Caco-2 (cell line): ENCODE measurements at regions of chr16 and their contacts with region 1.

Region 1: DNA sequence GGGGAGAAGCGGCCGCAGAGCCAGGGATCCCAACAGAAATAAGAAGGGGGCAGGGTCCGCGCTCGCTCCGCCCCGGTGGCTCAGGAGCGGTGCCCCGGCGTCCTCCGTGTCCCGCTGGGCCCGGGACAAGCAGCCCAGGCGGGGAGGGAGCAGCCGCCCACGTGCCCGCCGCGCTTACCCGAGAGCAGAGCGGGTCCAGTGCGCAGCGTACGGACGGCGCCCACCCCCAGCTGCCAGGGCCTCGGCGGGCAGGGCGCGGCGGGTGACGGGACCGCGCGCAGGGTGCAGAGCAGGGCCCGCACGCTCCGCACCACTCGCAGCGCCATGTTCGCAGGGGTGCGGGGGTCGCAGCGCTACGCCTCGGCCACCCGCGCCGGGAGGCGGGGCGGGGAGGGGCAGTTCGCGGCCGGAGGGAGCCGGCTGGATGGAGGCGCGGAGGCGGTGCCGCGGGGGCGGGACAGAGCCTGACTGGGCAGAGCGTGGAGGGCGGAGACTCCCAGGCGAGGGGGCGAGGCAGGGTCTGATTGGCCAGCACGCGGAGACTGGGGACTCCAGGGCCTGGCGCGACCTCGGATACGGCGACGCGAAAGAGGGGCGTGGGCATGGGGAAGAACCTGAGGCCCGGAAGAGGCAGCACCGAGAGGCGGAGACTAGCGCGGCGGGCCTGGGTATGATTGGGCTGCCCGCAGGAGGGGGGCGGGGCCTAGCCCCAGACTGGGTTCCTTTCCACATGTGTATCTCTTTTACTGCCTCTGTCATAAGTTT is at the start of gene GCSH:
- DNase-seq: peak; percentile 100
- H3K4me3 ChIP-seq: peak within 1 kb of the TSS; percentile 97
- H3K4me3 Mint-ChIP-seq: peak within 1 kb of the TSS; percentile 73
- H3K27ac Mint-ChIP-seq: peak within 1 kb of the TSS; percentile 74
- H3K4me1 ChIP-seq: 0 out of 2 replicates have a peak, but pooled peaks cover 3% of the 10 kb centered on the region
- H3K4me1 Mint-ChIP-seq: peaks cover 7% of the 10 kb centered on the region
- H3K27me3 ChIP-seq: no peaks in the 10 kb centered on the region
- H3K27me3 Mint-ChIP-seq: no peaks in the 10 kb centered on the region
- CTCF ChIP-seq: no peak
- total RNA-seq, gene GCSH: 105 and 115 TPM in 2 replicates

Region 2: GRCh38 chr16:80948886-80949493 is 147.1 kb before region 1 on chr16:
- CTCF ChIA-PET with region 1: no interaction called
- POLR2A ChIA-PET with region 1: no interaction called
- intact Hi-C with region 1: no loop called
- DNase-seq: peak; percentile 58 to 76
- H3K4me3 ChIP-seq: no peak overlapping the region
- H3K4me3 Mint-ChIP-seq: no peak overlapping the region
- H3K27ac Mint-ChIP-seq: no peak overlapping the region
- H3K4me1 ChIP-seq: no peaks in the 10 kb centered on the region
- H3K4me1 Mint-ChIP-seq: no peaks in the 10 kb centered on the region
- H3K27me3 ChIP-seq: no peaks in the 10 kb centered on the region
- H3K27me3 Mint-ChIP-seq: no peaks in the 10 kb centered on the region
- CTCF ChIP-seq: peak; percentile 74 to 78

Region 3: GRCh38 chr16:81006814-81007696 is 89.1 kb before region 1 on chr16 and contains the starts of genes CENPN and CMC2:
- CTCF ChIA-PET with region 1: no interaction called
- POLR2A ChIA-PET with region 1: no interaction called
- intact Hi-C with region 1: loop called (anchors 1 kb)
- DNase-seq: peak; percentile 99
- H3K4me3 ChIP-seq: peak within 1 kb of the TSS; percentile 85
- H3K4me3 Mint-ChIP-seq: peak within 1 kb of the TSS; percentile 94
- H3K27ac Mint-ChIP-seq: peak within 1 kb of the TSS; percentile 100
- H3K4me1 ChIP-seq: peaks cover 13% of the 10 kb centered on the region; the same call in 1 of the 2 replicates
- H3K4me1 Mint-ChIP-seq: peaks cover 7% of the 10 kb centered on the region
- H3K27me3 ChIP-seq: no peaks in the 10 kb centered on the region
- H3K27me3 Mint-ChIP-seq: no peaks in the 10 kb centered on the region
- CTCF ChIP-seq: no peak
- total RNA-seq, gene CENPN: 100 and 105 TPM in 2 replicates
- total RNA-seq, gene CMC2: 94.1 and 101 TPM in 2 replicates

Region 4: DNA sequence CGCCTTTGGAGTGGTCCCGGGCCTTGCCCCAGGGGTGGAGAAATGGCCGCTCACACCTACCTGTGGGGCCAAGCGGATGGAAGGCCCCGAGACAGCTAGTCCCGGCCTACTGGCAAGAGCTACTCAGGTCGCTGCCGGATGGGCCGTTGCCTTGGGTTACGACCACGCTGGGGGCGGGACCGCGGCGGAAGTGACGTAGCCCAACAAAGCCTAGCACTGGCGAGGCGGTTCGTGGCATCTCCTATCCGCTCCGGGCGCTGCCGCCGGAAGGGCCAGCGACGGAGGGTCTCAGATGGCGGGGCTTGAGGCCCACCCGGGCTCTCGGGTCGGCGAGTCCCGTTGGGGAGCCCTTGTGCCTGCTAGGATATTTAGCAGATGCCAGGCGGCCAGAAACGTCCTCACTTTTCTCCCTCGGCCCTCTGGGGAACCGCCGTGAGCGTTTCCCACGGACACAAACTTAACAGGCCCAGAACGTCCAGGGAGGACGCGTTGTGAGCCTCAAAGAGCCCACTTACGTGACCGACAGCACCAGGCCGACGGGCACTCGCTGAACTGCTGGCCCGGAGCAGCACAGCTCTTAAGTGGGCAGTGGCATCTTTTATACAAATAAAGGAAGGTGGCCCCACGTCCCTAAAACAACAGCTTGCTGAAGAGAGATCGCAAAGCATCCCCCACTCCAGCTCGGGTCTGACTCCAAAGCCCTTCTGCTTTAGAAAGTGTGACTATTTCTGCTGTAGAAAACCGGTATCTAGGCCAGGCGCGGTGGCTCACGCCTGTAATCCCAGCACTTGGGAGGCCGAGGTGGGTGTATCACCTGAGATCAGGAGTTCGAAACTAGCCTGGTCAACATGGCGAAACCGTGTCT is 18.8 kb before region 1 on chr16 and contains the start of gene C16orf46:
- CTCF ChIA-PET with region 1: interaction called, 3 read pairs
- POLR2A ChIA-PET with region 1: interaction called, 6 read pairs
- intact Hi-C with region 1: loop called (anchors 1 kb)
- DNase-seq: peak; percentile 97 to 99
- H3K4me3 ChIP-seq: peak within 1 kb of the TSS; percentile 68
- H3K4me3 Mint-ChIP-seq: no peak within 1 kb of the TSS
- H3K27ac Mint-ChIP-seq: no peak within 1 kb of the TSS
- H3K4me1 ChIP-seq: peaks cover 7% of the 10 kb centered on the region; the same call in 1 of the 2 replicates
- H3K4me1 Mint-ChIP-seq: no peaks in the 10 kb centered on the region
- H3K27me3 ChIP-seq: no peaks in the 10 kb centered on the region
- H3K27me3 Mint-ChIP-seq: no peaks in the 10 kb centered on the region
- CTCF ChIP-seq: no peak
- total RNA-seq, gene C16orf46: 0.70 and 0.95 TPM in 2 replicates

Region 5: DNA sequence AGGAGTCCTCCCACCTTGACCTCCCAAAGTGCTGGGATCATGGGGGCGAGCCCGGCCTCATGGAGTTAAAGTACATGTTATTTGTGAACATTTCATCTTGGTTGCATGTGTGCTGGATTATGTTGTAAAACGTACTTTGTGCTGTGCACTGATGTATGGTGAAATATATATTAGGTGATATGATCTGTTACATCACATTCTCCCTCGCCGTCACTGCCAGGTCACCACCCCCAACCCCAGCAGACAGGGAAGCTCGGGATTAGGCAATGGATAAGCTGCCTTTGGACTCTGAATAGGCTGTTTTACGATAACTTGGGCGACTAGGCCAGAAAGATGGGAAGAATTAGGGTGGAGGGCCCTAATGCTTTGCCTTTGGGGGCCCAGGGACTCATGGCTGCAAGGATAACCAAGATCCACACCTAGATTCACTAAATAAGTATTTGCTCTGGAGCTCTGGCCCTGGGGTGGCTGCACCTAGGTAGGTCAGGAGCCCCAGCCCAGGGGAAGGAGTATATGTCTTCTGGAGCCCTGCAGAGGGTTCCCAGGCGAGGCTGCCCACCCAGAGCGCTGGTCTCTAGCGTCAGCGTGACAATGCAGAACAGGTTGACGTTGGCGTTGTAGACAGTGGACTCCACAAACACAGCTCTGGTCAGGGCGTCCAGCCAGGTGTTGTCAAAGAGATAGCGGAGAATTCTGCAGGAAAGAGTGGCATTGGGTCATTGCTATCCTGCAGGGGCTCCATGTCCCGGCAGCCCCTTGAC is 27.1 kb after region 1 on chr16:
- CTCF ChIA-PET with region 1: no interaction called
- POLR2A ChIA-PET with region 1: no interaction called
- intact Hi-C with region 1: loop called (anchors 1 kb)
- DNase-seq: peak; percentile 69 to 71
- H3K4me3 ChIP-seq: no peak overlapping the region
- H3K4me3 Mint-ChIP-seq: no peak overlapping the region
- H3K27ac Mint-ChIP-seq: no peak overlapping the region
- H3K4me1 ChIP-seq: peaks cover 6% of the 10 kb centered on the region; the same call in 1 of the 2 replicates
- H3K4me1 Mint-ChIP-seq: no peaks in the 10 kb centered on the region
- H3K27me3 ChIP-seq: no peaks in the 10 kb centered on the region
- H3K27me3 Mint-ChIP-seq: peaks cover 3% of the 10 kb centered on the region
- CTCF ChIP-seq: no peak

Region 6: DNA sequence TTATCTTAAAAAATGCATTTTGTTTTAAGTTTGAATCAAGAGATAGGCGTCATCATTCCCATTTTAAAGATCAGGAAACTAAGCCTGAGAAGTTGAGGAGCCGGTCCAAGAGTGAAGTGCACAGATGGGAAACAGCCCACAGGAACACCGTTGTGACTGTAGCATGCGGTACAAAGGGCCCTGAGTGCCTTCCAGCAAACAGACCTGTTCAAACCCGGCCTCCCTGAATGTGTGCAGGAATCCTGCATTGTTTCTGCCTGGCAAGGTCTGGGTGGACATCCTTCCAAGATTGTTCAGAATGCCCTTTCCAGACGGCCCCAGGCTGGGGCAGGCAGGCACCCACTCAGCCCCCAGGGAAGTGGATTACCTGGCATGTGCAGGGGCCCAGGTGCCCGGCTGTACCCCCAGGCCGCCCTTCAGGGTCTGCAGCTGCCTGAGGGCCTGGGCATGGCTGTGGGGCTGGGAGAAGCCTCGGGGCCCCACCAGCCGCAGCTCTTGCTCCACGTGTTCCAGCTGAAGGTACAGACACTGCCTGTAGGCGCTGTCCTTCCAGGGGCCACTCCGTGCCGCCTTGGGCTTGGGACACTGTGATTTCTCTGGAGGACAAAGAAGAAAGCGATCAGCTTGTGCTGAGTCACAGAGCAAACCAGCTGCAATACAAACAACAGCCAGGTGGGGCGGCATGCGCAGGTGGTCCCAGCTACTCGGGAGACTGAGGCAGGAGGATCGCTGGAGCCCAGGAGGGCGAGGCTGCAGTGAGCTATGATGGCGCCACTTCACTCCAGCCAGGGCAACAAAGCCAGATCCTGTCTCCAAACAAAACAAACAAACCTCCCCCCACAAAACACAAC is 45.0 kb after region 1 on chr16:
- CTCF ChIA-PET with region 1: no interaction called
- POLR2A ChIA-PET with region 1: no interaction called
- intact Hi-C with region 1: loop called (anchors 5 kb)
- DNase-seq: peak; percentile 47 to 56
- H3K4me3 ChIP-seq: no peak overlapping the region
- H3K4me3 Mint-ChIP-seq: no peak overlapping the region
- H3K27ac Mint-ChIP-seq: no peak overlapping the region
- H3K4me1 ChIP-seq: peaks cover 39% of the 10 kb centered on the region
- H3K4me1 Mint-ChIP-seq: peaks cover 23% of the 10 kb centered on the region
- H3K27me3 ChIP-seq: no peaks in the 10 kb centered on the region
- H3K27me3 Mint-ChIP-seq: no peaks in the 10 kb centered on the region
- CTCF ChIP-seq: no peak